ENCODE measurements at regions of chr6 and their contacts with region 1.

Region 1: GRCh38 chr6:149028767-149029405 is 282.1 kb downstream of the UST start:
- DNase-seq: peak; percentile 65
- H3K4me3 Mint-ChIP-seq: peak overlapping the region; percentile 47
- H3K27ac Mint-ChIP-seq: peak overlapping the region; percentile 72
- H3K4me1 Mint-ChIP-seq: peaks cover 48% of the 10 kb centered on the region
- H3K27me3 Mint-ChIP-seq: no peaks in the 10 kb centered on the region

Region 2: DNA sequence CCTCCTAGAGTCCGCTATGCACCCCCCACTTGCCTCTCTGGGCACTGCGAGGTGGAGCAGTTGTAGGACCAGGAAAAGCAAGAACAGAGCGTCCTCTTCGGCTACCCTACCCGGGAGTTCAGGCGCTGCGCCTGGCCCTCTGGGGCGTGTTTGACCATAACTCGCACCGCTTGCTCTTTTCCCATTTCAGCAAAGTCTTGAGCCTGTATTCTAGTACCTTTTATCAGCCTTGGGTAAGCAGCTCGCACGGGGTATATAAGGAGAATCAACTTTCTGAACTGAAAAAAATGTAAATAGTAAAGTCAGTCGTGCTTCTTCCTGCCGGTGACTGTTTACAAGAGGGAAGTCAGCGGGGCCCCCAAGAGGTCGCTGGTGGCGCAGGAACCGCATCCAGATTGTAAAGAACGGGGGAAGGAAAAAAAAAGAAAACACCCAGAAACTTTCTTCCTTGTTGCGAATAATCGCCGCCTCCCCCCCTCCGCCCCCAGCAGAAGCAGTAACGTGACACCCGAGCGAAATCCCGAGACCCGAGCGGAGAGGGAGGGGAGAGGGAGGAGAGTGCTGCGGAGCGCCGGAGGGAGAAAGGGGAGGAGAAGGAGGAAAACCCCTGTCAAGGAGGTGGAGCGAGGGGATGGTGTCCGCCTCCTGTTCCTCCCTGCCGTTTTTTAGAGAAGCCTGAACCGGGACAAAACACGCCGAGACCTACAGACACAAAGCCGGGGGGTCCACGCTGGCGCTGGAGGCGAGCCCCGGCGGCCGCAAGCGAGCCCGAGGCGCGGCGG is 282.3 kb before region 1 on chr6 and contains the start of gene UST:
- CTCF ChIA-PET with region 1: no interaction called
- POLR2A ChIA-PET with region 1: no interaction called
- intact Hi-C with region 1: loop called (anchors 5 kb)
- DNase-seq: peak; percentile 79
- H3K4me3 Mint-ChIP-seq: peak within 1 kb of the TSS; percentile 88
- H3K27ac Mint-ChIP-seq: peak within 1 kb of the TSS; percentile 78
- H3K4me1 Mint-ChIP-seq: peaks cover 28% of the 10 kb centered on the region
- H3K27me3 Mint-ChIP-seq: peaks cover 8% of the 10 kb centered on the region
- total RNA-seq, gene UST: 3.7 to 4.9 TPM

Region 3: GRCh38 chr6:148999929-149000468 is 28.9 kb before region 1 on chr6:
- CTCF ChIA-PET with region 1: no interaction called
- POLR2A ChIA-PET with region 1: no interaction called
- intact Hi-C with region 1: no loop called
- DNase-seq: no peak
- H3K4me3 Mint-ChIP-seq: no peak overlapping the region
- H3K27ac Mint-ChIP-seq: no peak overlapping the region
- H3K4me1 Mint-ChIP-seq: peaks cover 16% of the 10 kb centered on the region
- H3K27me3 Mint-ChIP-seq: no peaks in the 10 kb centered on the region

Region 4: DNA sequence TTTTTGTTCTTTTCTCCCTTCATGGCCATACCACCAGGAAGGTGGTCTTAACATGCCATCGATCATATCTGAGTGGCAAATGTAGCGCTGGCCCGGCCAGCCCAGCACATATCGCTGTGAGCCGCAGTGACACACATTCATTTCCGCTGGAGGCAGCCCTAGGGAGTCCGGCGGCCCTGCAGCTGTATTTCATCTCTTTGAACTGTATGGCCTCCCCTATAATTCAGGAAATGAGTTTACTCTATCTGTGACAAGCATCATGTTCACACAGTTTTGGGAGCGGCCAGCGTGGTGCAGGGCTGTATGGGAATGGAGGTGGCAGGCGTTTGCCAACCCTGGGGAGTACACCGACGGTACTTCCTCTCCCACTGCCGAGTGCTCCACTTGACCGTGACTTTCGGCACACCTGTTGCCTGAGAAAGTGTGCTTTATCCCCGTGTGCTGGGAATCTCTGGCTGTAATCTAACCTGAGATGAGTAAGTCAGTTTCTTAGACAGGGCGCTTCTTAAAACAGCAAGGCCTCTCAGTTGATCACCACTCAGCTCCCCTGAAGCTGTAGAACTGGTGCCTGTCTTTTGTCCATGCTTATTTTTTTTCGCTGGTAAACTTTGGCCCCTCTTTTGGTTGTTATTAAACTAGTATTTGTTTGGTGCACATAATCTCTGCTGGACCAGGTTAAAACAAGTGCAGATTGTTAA is 31.6 kb after region 1 on chr6:
- CTCF ChIA-PET with region 1: interaction called, 8 read pairs
- POLR2A ChIA-PET with region 1: interaction called, 35 read pairs
- intact Hi-C with region 1: loop called (anchors 1 kb)
- DNase-seq: peak; percentile 80
- H3K4me3 Mint-ChIP-seq: peak overlapping the region; percentile 68
- H3K27ac Mint-ChIP-seq: peak overlapping the region; percentile 91
- H3K4me1 Mint-ChIP-seq: peaks cover 58% of the 10 kb centered on the region
- H3K27me3 Mint-ChIP-seq: no peaks in the 10 kb centered on the region

Region 5: GRCh38 chr6:149094156-149094555 is 65.3 kb after region 1 on chr6:
- CTCF ChIA-PET with region 1: interaction called, 16 read pairs
- POLR2A ChIA-PET with region 1: interaction called, 35 read pairs
- intact Hi-C with region 1: no loop called
- DNase-seq: peak; percentile 51
- H3K4me3 Mint-ChIP-seq: peak overlapping the region; percentile 45
- H3K27ac Mint-ChIP-seq: peak overlapping the region; percentile 93
- H3K4me1 Mint-ChIP-seq: peaks cover 67% of the 10 kb centered on the region
- H3K27me3 Mint-ChIP-seq: no peaks in the 10 kb centered on the region

Region 6: GRCh38 chr6:149235130-149235561 is 206.3 kb after region 1 on chr6:
- CTCF ChIA-PET with region 1: no interaction called
- POLR2A ChIA-PET with region 1: no interaction called
- intact Hi-C with region 1: loop called (anchors 1 kb)
- DNase-seq: no peak
- H3K4me3 Mint-ChIP-seq: no peak overlapping the region
- H3K27ac Mint-ChIP-seq: peak overlapping the region; percentile 91
- H3K4me1 Mint-ChIP-seq: peaks cover 53% of the 10 kb centered on the region
- H3K27me3 Mint-ChIP-seq: no peaks in the 10 kb centered on the region

Region 7: DNA sequence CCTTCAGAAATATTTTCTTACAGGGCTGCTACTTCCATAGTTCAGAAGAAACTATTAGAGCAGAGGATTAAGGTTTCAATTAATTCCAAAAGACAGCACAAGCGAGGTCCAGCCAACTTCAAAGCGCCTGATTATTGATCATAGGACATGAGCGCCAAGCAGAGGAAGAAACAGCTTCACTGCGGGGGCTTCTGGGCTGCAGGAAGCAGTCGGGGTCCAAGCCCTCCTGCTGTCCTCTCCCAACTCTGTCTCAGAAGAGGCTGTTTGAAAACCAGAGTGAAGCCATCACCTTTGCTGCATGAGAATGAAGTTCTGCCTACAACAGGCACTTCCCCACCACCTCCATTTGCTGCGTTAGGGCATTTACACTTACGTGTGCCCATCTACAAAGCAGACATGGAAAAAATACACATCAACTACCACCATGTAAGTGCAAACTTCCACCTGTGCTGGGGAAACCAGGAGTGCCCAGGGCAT is 395.1 kb after region 1 on chr6:
- CTCF ChIA-PET with region 1: interaction called, 7 read pairs
- POLR2A ChIA-PET with region 1: interaction called, 7 read pairs
- intact Hi-C with region 1: loop called (anchors 1 kb)
- DNase-seq: no peak
- H3K4me3 Mint-ChIP-seq: no peak overlapping the region
- H3K27ac Mint-ChIP-seq: no peak overlapping the region
- H3K4me1 Mint-ChIP-seq: peaks cover 25% of the 10 kb centered on the region
- H3K27me3 Mint-ChIP-seq: no peaks in the 10 kb centered on the region